Mammary epithelial cell (primary cell): ENCODE measurements at regions of chr5 and their contacts with region 1.

Region 1: DNA sequence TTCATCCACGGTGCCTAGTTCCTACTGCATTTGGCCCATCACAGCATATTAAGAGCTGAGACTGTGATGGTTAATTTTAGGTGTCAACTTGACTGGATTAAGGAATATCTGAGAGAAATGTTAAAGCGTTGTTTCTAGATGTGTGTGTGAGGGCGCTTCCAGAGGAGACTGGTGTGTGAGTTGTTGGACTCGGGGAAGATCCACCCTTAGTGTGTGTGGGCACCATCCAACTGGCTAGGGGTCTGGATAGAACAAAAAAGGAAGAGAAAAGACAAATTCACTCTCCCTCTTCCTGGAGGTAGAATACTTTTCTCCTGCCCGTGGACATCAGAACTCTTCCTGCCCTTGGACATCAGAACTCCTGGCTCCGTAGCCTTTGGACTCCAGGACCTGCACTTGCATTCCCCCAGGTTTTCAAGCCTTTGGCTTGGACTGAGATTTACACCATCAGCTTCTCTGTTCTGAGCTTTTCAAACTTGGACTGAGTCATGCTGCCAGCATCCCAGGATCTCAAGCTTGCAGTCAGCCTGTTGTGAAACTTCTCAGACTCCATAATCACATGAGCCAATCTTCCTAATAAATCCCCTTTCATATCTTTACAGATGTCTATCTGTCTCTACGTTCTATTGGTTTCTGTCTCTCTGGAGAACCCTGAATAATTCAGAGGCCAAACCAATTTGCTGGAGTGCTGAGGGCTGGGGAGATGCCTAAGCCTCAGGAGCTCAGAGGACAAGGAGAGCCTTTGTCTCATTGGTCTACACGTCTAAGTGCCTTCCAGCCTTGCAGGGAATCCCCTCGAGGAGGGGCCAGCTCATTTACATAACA is 164.5 kb downstream of the DCP2 start:
- DNase-seq: peak; percentile 90
- H3K4me3 ChIP-seq: no peak overlapping the region
- H3K27ac ChIP-seq: peak overlapping the region; percentile 55
- H3K4me1 ChIP-seq: peaks cover 36% of the 10 kb centered on the region
- H3K27me3 ChIP-seq: no peaks in the 10 kb centered on the region
- CTCF ChIP-seq: no peak

Region 2: DNA sequence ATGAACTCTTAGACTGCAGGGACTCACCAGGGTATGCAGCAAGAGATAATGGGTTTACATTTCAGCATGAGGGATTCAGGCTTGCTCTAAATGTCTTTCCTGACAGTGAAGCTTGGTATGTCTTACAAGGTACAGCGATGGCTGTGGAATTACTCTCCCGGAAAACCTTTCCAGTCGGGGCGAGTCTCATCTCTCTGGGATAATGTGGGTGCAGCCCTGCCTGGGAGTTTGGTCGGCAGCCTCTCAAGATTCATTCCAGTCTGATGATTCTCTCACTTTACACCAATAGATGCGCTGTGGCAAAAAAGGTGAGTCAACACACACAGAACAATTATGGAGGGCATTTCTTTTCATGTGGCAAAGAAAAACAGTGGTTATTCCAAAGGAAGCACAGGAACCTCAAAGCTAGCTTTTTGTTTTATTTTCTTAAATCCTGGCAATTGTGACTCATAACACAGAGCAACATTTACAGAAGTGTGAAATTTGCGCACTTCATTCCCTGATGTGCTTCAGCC is 25.9 kb after region 1 on chr5:
- CTCF ChIA-PET with region 1: no interaction called
- dilution Hi-C with region 1: no loop called
- in situ Hi-C with region 1: no loop called
- intact Hi-C with region 1: loop called (anchors 1 kb)
- DNase-seq: peak; percentile 97
- H3K4me3 ChIP-seq: no peak overlapping the region
- H3K27ac ChIP-seq: peak overlapping the region; percentile 74
- H3K4me1 ChIP-seq: peaks cover 75% of the 10 kb centered on the region
- H3K27me3 ChIP-seq: no peaks in the 10 kb centered on the region
- CTCF ChIP-seq: no peak